AG04450 (cell line): ENCODE measurements at regions of chr6 and their contacts with region 1.

Region 1: GRCh38 chr6:100664274-100665040 is 199.7 kb upstream of the SIM1 start:
- DNase-seq: peak; percentile 2
- H3K4me3 ChIP-seq: no peak overlapping the region
- H3K27ac ChIP-seq: no peak overlapping the region
- H3K27me3 ChIP-seq: no peaks in the 10 kb centered on the region
- CTCF ChIP-seq: peak; percentile 71

Region 2: GRCh38 chr6:100105138-100105753 is 559.2 kb before region 1 on chr6:
- CTCF ChIA-PET with region 1: interaction called, 23 read pairs
- POLR2A ChIA-PET with region 1: no interaction called
- DNase-seq: no peak
- H3K4me3 ChIP-seq: no peak overlapping the region
- H3K27ac ChIP-seq: no peak overlapping the region
- H3K27me3 ChIP-seq: peaks cover 13% of the 10 kb centered on the region
- CTCF ChIP-seq: no peak

Region 3: DNA sequence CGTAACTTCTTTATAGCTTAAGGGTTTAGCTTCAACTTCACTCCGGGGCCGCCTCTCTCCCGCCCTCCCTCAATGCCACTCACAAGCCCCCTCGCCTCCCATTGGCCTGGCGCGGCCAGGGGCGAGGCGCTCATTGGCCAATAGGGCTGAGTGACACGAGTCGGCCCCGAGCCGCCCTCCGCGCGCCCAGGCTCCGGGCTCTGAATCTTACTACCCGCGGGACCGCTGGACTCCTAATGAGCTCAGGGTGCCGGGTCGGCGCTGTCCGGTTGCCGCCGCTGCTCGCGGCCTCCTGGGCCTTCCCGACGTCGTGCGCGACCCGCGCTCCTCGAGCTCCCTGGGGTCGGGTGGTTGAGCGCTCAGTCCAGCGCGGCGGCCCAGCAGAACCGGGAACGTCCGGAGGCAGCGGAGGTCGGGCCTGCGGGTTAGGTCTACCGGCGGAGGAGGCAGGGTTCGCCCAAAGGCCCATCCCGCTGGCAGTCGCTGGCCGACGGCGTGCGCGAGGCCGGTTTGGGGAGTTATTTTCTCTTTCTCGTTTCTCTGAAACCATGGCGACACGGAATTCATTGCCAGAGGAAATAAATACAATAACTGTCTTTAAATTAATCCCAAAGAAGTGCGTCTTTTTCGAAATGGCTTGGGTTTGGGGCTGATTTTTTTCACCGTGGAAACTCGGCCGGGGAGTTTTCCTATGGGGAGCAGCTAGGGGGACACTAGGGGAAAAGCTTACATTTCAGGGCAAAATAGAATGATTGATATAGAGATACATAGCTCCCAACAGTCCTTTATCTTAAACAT is 199.4 kb before region 1 on chr6 and contains the start of gene SIM1:
- CTCF ChIA-PET with region 1: interaction called, 10 read pairs
- POLR2A ChIA-PET with region 1: no interaction called
- DNase-seq: no peak
- H3K4me3 ChIP-seq: peak within 1 kb of the TSS; percentile 45
- H3K27ac ChIP-seq: no peak within 1 kb of the TSS
- H3K27me3 ChIP-seq: peaks cover 97% of the 10 kb centered on the region
- CTCF ChIP-seq: no peak
- polyA plus RNA-seq, gene SIM1: not detected in 2 replicates

Region 4: GRCh38 chr6:100685747-100686146 is 21.3 kb after region 1 on chr6:
- CTCF ChIA-PET with region 1: interaction called, 37 read pairs
- POLR2A ChIA-PET with region 1: no interaction called
- DNase-seq: no peak
- H3K4me3 ChIP-seq: no peak overlapping the region
- H3K27ac ChIP-seq: no peak overlapping the region
- H3K27me3 ChIP-seq: no peaks in the 10 kb centered on the region
- CTCF ChIP-seq: no peak

Region 5: GRCh38 chr6:100719883-100720682 is 55.6 kb after region 1 on chr6:
- CTCF ChIA-PET with region 1: interaction called, 11 read pairs
- POLR2A ChIA-PET with region 1: no interaction called
- DNase-seq: no peak
- H3K4me3 ChIP-seq: no peak overlapping the region
- H3K27ac ChIP-seq: no peak overlapping the region
- H3K27me3 ChIP-seq: no peaks in the 10 kb centered on the region
- CTCF ChIP-seq: peak; percentile 50

Region 6: GRCh38 chr6:100796049-100796823 is 131.8 kb after region 1 on chr6:
- CTCF ChIA-PET with region 1: no interaction called
- POLR2A ChIA-PET with region 1: no interaction called
- DNase-seq: no peak
- H3K4me3 ChIP-seq: no peak overlapping the region
- H3K27ac ChIP-seq: no peak overlapping the region
- H3K27me3 ChIP-seq: no peaks in the 10 kb centered on the region
- CTCF ChIP-seq: no peak